ENCODE measurements at regions of chr7 and their contacts with region 1.

Region 1: GRCh38 chr7:39580149-39580874 is 14.1 kb downstream of the YAE1 start:
- DNase-seq: peak; percentile 84
- ATAC-seq: peak; percentile 87
- H3K4me3 Mint-ChIP-seq: no peak overlapping the region
- H3K27ac Mint-ChIP-seq: no peak overlapping the region
- H3K4me1 Mint-ChIP-seq: peaks cover 8% of the 10 kb centered on the region
- H3K27me3 Mint-ChIP-seq: no peaks in the 10 kb centered on the region

Region 2: GRCh38 chr7:39394105-39394680 is 186.1 kb before region 1 on chr7:
- CTCF ChIA-PET with region 1: no interaction called
- POLR2A ChIA-PET with region 1: no interaction called
- DNase-seq: no peak
- ATAC-seq: no peak
- H3K4me3 Mint-ChIP-seq: no peak overlapping the region
- H3K27ac Mint-ChIP-seq: no peak overlapping the region
- H3K4me1 Mint-ChIP-seq: no peaks in the 10 kb centered on the region
- H3K27me3 Mint-ChIP-seq: peaks cover 15% of the 10 kb centered on the region

Region 3: DNA sequence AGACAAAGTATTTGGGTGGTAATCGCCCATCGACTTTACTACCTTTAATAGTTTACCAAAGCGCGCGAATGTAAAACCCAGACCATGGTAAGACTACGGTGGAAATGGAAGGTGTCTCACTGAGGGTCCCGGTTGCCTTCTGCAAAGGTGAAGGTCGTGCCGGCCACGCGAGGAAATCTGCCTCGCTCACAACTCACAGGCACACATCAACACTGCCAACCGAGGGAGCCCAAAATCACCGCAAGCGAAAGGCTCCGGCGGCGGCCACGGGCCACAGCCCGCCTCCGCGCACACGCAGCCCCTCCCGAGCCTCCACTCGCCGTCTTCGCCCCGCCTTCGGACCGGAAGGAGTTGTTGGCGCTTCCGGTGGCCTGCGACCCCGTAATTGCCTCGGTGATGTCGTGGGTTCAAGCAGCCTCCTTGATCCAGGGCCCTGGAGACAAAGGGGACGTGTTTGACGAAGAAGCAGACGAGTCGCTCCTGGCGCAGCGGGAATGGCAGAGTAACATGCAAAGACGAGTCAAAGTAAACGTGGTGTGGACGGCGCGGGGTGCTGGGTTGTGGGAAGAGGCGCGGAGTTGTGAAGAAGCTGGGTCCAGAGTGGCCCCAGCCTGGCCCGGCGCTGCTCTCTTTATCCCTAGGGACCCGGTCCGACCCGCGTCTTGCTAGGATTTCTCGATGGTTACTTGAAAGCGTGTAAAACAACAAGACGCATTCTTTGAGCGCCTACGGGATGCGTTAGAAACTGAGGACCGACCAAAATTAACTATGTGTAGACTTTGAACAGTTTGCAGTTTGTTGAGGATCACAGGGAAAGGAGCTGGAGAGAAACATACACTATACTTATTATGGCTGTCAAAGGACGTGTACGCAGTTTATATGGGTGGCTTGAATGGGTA is 14.0 kb before region 1 on chr7 and contains the start of gene YAE1:
- CTCF ChIA-PET with region 1: interaction called, 19 read pairs
- POLR2A ChIA-PET with region 1: interaction called, 3 read pairs
- DNase-seq: peak; percentile 87
- ATAC-seq: peak; percentile 97
- H3K4me3 Mint-ChIP-seq: peak within 1 kb of the TSS; percentile 94
- H3K27ac Mint-ChIP-seq: peak within 1 kb of the TSS; percentile 95
- H3K4me1 Mint-ChIP-seq: peaks cover 14% of the 10 kb centered on the region
- H3K27me3 Mint-ChIP-seq: peaks cover 1% of the 10 kb centered on the region
- total RNA-seq, gene YAE1: 10.4 to 10.7 TPM

Region 4: GRCh38 chr7:39594988-39595620 is 14.8 kb after region 1 on chr7:
- CTCF ChIA-PET with region 1: interaction called, 40 read pairs
- POLR2A ChIA-PET with region 1: no interaction called
- DNase-seq: no peak
- ATAC-seq: no peak
- H3K4me3 Mint-ChIP-seq: no peak overlapping the region
- H3K27ac Mint-ChIP-seq: no peak overlapping the region
- H3K4me1 Mint-ChIP-seq: peaks cover 28% of the 10 kb centered on the region
- H3K27me3 Mint-ChIP-seq: no peaks in the 10 kb centered on the region

Region 5: GRCh38 chr7:39623018-39623731 is 42.9 kb after region 1 on chr7 and contains the start of gene RALA:
- CTCF ChIA-PET with region 1: interaction called, 71 read pairs
- POLR2A ChIA-PET with region 1: interaction called, 5 read pairs
- DNase-seq: peak; percentile 93
- ATAC-seq: peak; percentile 97
- H3K4me3 Mint-ChIP-seq: peak within 1 kb of the TSS; percentile 98
- H3K27ac Mint-ChIP-seq: peak within 1 kb of the TSS; percentile 96
- H3K4me1 Mint-ChIP-seq: peaks cover 46% of the 10 kb centered on the region
- H3K27me3 Mint-ChIP-seq: no peaks in the 10 kb centered on the region
- total RNA-seq, gene RALA: 32.2 to 33.9 TPM

Region 6: GRCh38 chr7:39732837-39733804 is 152.8 kb after region 1 on chr7:
- CTCF ChIA-PET with region 1: interaction called, 498 read pairs
- POLR2A ChIA-PET with region 1: interaction called, 3 read pairs
- DNase-seq: peak; percentile 96
- ATAC-seq: peak; percentile 93
- H3K4me3 Mint-ChIP-seq: peak overlapping the region; percentile 85
- H3K27ac Mint-ChIP-seq: peak overlapping the region; percentile 97
- H3K4me1 Mint-ChIP-seq: peaks cover 47% of the 10 kb centered on the region
- H3K27me3 Mint-ChIP-seq: no peaks in the 10 kb centered on the region

Region 7: DNA sequence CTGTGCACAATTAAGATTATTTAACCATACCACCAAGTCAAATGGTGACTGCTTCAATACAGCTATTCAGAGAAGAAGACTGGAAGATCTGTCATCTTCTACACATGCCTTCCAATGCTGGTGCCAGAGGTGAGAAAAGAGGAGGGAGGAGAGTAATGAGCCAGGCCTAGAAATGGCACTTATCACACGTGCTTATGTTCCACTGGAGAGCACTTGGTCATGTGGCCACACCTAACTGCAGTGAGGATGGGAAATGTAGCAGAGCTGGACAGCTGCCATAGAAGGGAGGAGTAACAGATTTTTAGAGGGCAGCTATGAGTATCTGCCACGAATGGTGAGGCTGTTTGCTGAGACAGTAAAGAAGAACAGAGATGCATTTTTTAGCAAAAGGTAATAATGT is 477.0 kb after region 1 on chr7:
- CTCF ChIA-PET with region 1: interaction called, 17 read pairs
- POLR2A ChIA-PET with region 1: no interaction called
- DNase-seq: no peak
- ATAC-seq: no peak
- H3K4me3 Mint-ChIP-seq: no peak overlapping the region
- H3K27ac Mint-ChIP-seq: no peak overlapping the region
- H3K4me1 Mint-ChIP-seq: peaks cover 3% of the 10 kb centered on the region
- H3K27me3 Mint-ChIP-seq: no peaks in the 10 kb centered on the region

Measured in activated CD8-positive, alpha-beta T cell treated with anti-CD3 and anti-CD28 coated beads, Interleukin-2, amount 10 ng/mL, durations not matched to agents 7 days and 5 days (primary cell).